Breast epithelium (tissue), 4 donors: ENCODE measurements at regions of chr4 and their contacts with region 1.

Region 1: DNA sequence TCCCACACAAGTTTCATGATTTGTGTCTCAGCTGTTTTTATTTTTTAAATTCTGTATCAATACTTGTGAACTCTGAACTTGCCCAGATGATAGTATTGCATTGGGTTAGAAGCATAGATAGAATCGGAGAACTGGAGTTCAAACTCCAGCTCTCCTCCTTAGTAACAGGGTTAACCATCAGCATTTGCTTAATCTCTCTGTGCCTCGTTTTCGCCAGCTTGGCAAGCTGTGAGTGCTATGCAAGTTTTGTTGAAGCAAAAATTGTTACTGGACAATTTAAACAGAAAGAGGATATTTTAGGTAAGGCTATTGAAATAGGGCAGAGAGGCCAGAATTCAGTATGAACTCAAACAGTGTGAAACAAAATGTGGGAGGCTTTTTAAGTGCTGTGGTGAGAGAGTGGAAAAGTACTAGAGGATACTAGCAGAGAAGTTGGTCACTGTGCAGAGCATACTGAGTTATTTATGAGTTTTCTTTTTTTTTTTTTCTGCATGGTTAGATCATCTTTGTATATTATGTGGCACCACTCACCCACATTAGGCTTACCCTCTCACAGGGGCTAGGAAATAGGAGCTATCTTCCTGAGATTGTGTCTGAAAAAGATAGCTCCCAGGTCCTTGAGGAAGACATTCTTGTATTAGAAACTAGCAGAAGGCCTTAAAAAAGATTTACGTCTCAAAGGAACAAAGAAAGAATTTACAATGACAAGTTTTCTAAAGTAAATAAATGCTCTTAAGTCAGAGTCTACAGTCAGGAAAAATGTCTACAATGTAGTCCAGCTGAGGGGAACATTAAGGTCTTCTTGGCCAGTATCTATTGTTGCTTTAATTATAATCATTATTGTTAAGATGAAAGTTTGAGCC is 1126.6 kb downstream of the FAT4 start:
- DNase-seq: no peak
- H3K4me3 ChIP-seq: no peak overlapping the region
- H3K27ac ChIP-seq: peak overlapping the region in 1 of 2 donors; percentile 19
- H3K4me1 ChIP-seq: no peaks in the 10 kb centered on the region
- H3K27me3 ChIP-seq: no peaks in the 10 kb centered on the region
- CTCF ChIP-seq: no peak
- POLR2A ChIP-seq: no peak

Region 2: GRCh38 chr4:125370478-125370877 is 1070.9 kb before region 1 on chr4:
- intact Hi-C with region 1: loop called (anchors 5 kb)
- DNase-seq: no peak
- H3K4me3 ChIP-seq: no peak overlapping the region
- H3K27ac ChIP-seq: no peak overlapping the region
- H3K4me1 ChIP-seq: no peaks in the 10 kb centered on the region
- H3K27me3 ChIP-seq: no peaks in the 10 kb centered on the region
- CTCF ChIP-seq: no peak
- POLR2A ChIP-seq: no peak

Region 3: DNA sequence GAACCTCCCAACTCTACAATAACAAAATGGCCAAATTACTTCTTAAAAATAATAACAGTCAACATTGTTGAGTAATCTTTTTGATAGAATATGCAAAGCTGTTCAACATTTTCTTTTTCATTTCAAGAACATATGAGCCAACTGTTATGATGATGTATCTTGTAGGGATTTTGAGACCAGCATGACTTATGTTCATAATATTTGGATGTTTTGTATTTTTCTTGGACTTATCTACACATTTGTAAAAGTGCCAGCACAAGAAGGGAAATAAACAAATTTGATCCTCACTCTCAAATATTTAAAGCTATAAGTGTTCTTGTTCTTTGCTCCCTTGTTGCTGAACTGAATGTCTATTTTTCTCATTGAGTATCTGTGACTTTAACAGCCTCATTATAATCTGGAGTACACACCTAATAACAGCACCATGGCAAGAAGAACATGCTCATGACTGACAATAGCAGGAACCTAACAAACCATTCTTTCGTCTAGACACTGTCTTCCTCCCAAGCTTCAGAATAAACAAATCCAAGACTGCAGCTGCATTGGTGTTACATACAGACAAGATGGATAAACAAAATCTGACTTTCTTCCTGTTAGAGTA is 77.0 kb before region 1 on chr4:
- intact Hi-C with region 1: no loop called
- DNase-seq: no peak
- H3K4me3 ChIP-seq: no peak overlapping the region
- H3K27ac ChIP-seq: no peak overlapping the region
- H3K4me1 ChIP-seq: no peaks in the 10 kb centered on the region
- H3K27me3 ChIP-seq: no peaks in the 10 kb centered on the region
- CTCF ChIP-seq: no peak
- POLR2A ChIP-seq: no peak

Region 4: DNA sequence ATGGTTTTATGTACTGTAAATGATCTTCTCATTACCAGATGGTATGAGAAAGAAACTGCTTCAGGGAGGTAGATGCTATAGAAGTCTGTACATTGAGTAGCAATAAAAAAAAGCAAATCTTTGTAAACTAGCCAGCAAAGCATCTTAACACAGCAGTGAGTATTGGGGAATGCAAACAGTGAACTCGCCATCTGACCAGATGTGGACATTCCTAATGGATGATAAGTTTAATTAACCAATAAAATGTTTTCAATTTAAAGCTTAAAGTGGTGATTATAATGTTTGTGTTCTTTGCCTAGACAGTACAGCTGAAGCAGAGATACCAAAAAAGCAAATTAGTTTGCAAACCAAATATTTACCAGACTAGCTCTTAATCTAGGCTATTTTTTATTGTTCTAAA is 17.6 kb after region 1 on chr4:
- intact Hi-C with region 1: loop called (anchors 2 kb)
- DNase-seq: no peak
- H3K4me3 ChIP-seq: no peak overlapping the region
- H3K27ac ChIP-seq: no peak overlapping the region
- H3K4me1 ChIP-seq: no peaks in the 10 kb centered on the region
- H3K27me3 ChIP-seq: no peaks in the 10 kb centered on the region
- CTCF ChIP-seq: no peak
- POLR2A ChIP-seq: no peak